Panc1 (cell line): ENCODE measurements at regions of chr4 and their contacts with region 1.

Region 1: GRCh38 chr4:183074296-183074990 is 24.6 kb upstream of the WWC2 start:
- DNase-seq: no peak
- ATAC-seq: no peak
- H3K4me3 ChIP-seq: no peak overlapping the region
- H3K27ac ChIP-seq: no peak overlapping the region; the same call in 1 of the 2 replicates
- H3K4me1 ChIP-seq: peaks cover 3% of the 10 kb centered on the region; the same call in 1 of the 2 replicates
- H3K27me3 ChIP-seq: no peaks in the 10 kb centered on the region
- CTCF ChIP-seq: no peak

Region 2: GRCh38 chr4:182492422-182492821 is 582.0 kb before region 1 on chr4:
- CTCF ChIA-PET with region 1: no interaction called
- POLR2A ChIA-PET with region 1: no interaction called
- in situ Hi-C with region 1: no loop called
- intact Hi-C with region 1: no loop called
- DNase-seq: no peak
- ATAC-seq: no peak
- H3K4me3 ChIP-seq: no peak overlapping the region; a peak in 1 of 4 replicates
- H3K27ac ChIP-seq: no peak overlapping the region
- H3K4me1 ChIP-seq: no peaks in the 10 kb centered on the region
- H3K27me3 ChIP-seq: no peaks in the 10 kb centered on the region
- CTCF ChIP-seq: no peak

Region 3: DNA sequence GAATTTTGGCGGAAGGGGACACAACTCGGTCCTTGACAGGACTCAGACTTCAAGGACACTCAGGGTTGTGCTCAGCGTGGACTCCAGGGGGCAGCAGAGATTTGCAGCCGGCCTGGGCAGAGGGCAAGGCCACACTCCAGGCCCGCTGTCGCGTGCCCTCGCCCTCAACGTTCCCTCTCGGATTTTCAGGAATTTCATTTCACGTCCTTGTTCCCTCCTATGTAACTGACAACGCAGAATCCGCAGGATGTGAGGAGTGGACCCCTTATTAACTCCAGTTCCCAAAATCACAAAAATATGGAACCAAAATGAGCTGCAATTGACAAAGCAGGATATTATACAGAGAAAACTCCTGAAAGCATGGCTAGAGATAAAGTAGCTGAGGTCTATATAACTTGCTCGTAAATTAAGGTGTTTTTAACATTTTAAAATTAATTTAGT is 136.2 kb before region 1 on chr4:
- CTCF ChIA-PET with region 1: interaction called, 4 read pairs
- POLR2A ChIA-PET with region 1: no interaction called
- in situ Hi-C with region 1: no loop called
- intact Hi-C with region 1: loop called (anchors 5 kb)
- DNase-seq: peak; percentile 51
- ATAC-seq: peak; percentile 100
- H3K4me3 ChIP-seq: no peak overlapping the region
- H3K27ac ChIP-seq: peak overlapping the region; percentile 74; the same call in 1 of the 2 replicates
- H3K4me1 ChIP-seq: peaks cover 6% of the 10 kb centered on the region
- H3K27me3 ChIP-seq: no peaks in the 10 kb centered on the region
- CTCF ChIP-seq: peak; percentile 91

Region 4: GRCh38 chr4:183256756-183257385 is 182.4 kb after region 1 on chr4:
- CTCF ChIA-PET with region 1: interaction called, 10 read pairs
- POLR2A ChIA-PET with region 1: no interaction called
- in situ Hi-C with region 1: no loop called
- intact Hi-C with region 1: loop called (anchors 1 kb)
- DNase-seq: no peak
- ATAC-seq: peak; percentile 81
- H3K4me3 ChIP-seq: no peak overlapping the region
- H3K27ac ChIP-seq: peak overlapping the region; percentile 17
- H3K4me1 ChIP-seq: peaks cover 39% of the 10 kb centered on the region
- H3K27me3 ChIP-seq: no peaks in the 10 kb centered on the region
- CTCF ChIP-seq: peak; percentile 83

Region 5: DNA sequence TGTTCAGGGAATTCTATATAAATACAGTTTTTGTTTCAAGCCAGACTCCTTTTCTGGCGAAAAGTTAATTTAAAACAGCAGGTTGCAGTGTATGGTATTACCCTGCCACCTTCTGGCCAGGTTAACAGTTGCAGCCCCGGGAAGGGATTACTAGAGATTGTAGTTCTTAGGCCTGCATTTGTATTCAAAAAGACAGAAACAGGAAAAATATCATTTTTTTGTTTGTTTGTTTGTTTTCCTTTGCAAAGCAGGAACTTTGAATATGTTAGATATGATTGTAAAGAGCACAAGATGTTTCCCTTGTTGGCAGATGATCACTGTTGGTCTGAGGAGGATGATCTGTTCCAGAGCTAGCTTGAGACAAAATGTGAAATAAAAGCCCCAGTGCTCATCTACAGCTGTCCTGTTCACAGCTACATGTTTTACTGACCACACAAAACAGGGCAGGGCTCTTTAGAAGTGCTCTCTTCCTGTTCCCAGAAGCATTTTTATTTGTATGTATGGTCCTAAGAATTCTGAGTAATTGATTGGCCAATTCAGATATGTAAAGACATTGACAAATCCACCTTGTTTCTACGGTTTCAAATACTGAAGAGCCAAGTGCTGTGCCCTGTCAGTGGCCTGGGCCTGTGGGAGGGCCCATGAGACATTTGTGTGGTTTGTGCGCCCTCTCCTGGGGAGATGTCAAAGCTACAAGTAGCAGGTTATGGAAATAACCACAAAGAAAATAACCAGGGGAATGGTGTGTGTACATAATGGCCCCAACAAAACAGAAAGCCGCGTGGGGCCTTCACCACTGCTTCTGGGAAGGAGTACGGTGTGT is 187.7 kb after region 1 on chr4:
- CTCF ChIA-PET with region 1: interaction called, 4 read pairs
- POLR2A ChIA-PET with region 1: no interaction called
- in situ Hi-C with region 1: no loop called
- intact Hi-C with region 1: loop called (anchors 1 kb)
- DNase-seq: no peak
- ATAC-seq: peak; percentile 89
- H3K4me3 ChIP-seq: no peak overlapping the region
- H3K27ac ChIP-seq: peak overlapping the region; percentile 66
- H3K4me1 ChIP-seq: peaks cover 12% of the 10 kb centered on the region
- H3K27me3 ChIP-seq: no peaks in the 10 kb centered on the region
- CTCF ChIP-seq: peak; percentile 77